ENCODE measurements at regions of chr3 and their contacts with region 1.

Region 1: GRCh38 chr3:116299646-116300081 is 145.6 kb downstream of the LSAMP start:
- DNase-seq: peak; percentile 31
- ATAC-seq: peak; percentile 88
- H3K4me3 ChIP-seq: no peak overlapping the region
- H3K27ac ChIP-seq: no peak overlapping the region
- H3K4me1 ChIP-seq: no peaks in the 10 kb centered on the region
- H3K27me3 ChIP-seq: no peaks in the 10 kb centered on the region
- CTCF ChIP-seq: no peak
- EP300 ChIP-seq: no peak
- POLR2A ChIP-seq: no peak
- RAD21 ChIP-seq: no peak

Region 2: GRCh38 chr3:116216761-116217160 is 82.9 kb before region 1 on chr3:
- CTCF ChIA-PET with region 1: no interaction called
- POLR2A ChIA-PET with region 1: no interaction called
- RAD21 ChIA-PET with region 1: no interaction called
- SMC1A ChIA-PET with region 1: no interaction called
- in situ Hi-C with region 1: no loop called
- intact Hi-C with region 1: no loop called
- DNase-seq: no peak
- ATAC-seq: no peak
- H3K4me3 ChIP-seq: no peak overlapping the region
- H3K27ac ChIP-seq: no peak overlapping the region
- H3K4me1 ChIP-seq: no peaks in the 10 kb centered on the region
- H3K27me3 ChIP-seq: peaks cover 0 to 3% of the 10 kb centered on the region in 2 experiments; a peak in 1 of 4 replicates
- CTCF ChIP-seq: no peak
- EP300 ChIP-seq: no peak
- POLR2A ChIP-seq: no peak
- RAD21 ChIP-seq: no peak

Region 3: DNA sequence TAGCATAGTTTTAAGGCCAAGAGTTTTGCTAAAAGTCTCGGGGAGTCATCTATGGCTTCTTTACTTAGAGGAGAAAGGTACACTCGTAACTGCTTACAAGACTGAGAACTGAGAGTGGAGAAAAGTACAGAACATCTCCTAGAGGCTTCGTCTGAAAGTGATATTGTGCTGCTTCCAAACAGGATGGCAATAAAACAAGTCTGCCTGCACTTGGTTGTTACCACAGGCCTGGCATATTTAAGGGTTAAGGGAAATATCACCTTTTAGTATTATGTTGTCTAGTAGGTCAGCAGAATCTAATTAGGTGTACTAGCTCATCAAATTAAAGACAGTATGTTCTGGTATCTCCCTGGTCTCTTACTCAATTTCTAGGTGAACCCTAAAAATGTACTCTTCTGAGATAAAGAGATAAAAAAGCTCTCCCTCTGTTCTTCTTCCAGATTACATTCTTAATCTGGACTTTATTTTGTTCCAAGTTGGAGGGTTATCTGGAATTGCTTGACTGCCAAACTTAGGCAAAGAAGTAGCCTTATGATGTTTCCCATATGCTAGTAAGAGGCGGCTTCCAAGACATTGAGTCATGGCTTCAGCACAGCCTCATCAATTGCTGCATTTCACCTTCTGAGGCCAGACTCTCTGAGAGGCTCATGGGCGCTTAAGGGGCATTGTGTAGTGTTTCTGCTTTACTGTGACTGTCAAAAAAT is 35.7 kb before region 1 on chr3:
- CTCF ChIA-PET with region 1: no interaction called
- POLR2A ChIA-PET with region 1: interaction called, 8 read pairs
- RAD21 ChIA-PET with region 1: interaction called, 3 read pairs
- SMC1A ChIA-PET with region 1: interaction called, 13 read pairs
- in situ Hi-C with region 1: no loop called
- intact Hi-C with region 1: no loop called
- DNase-seq: no peak
- ATAC-seq: no peak
- H3K4me3 ChIP-seq: no peak overlapping the region
- H3K27ac ChIP-seq: no peak overlapping the region
- H3K4me1 ChIP-seq: no peaks in the 10 kb centered on the region
- H3K27me3 ChIP-seq: no peaks in the 10 kb centered on the region
- CTCF ChIP-seq: no peak
- EP300 ChIP-seq: no peak
- POLR2A ChIP-seq: no peak
- RAD21 ChIP-seq: no peak

Region 4: GRCh38 chr3:116281313-116282143 is 18.1 kb before region 1 on chr3:
- CTCF ChIA-PET with region 1: interaction called, 5 read pairs
- POLR2A ChIA-PET with region 1: interaction called, 3 read pairs
- RAD21 ChIA-PET with region 1: interaction called, 17 read pairs
- SMC1A ChIA-PET with region 1: interaction called, 12 read pairs
- in situ Hi-C with region 1: no loop called
- intact Hi-C with region 1: no loop called
- DNase-seq: no peak
- ATAC-seq: peak; percentile 89
- H3K4me3 ChIP-seq: no peak overlapping the region
- H3K27ac ChIP-seq: no peak overlapping the region
- H3K4me1 ChIP-seq: no peaks in the 10 kb centered on the region
- H3K27me3 ChIP-seq: no peaks in the 10 kb centered on the region; a peak in 2 of 4 replicates
- CTCF ChIP-seq: no peak
- EP300 ChIP-seq: peak in 1 of 2 experiments; percentile 43; a peak in 1 of 4 replicates
- POLR2A ChIP-seq: no peak
- RAD21 ChIP-seq: no peak

Region 5: DNA sequence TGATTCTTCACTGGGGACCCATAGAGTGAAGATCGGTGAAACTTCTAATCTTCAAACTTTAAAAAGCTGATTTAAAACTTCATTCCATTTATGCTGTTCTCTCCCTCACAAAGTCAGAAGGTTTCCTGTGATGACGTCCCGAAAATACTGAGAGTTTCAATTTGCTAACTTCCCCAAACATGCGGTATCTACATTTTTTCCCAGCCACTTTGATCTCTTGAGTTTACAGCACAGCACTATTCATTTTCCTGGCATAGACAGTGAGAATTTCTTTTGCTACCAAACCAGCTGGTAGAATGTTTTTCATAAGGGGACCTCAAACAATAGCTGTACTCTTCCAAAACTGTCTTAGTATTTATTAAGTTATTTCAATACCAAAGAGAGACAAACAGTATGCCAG is 11.2 kb before region 1 on chr3:
- CTCF ChIA-PET with region 1: interaction called, 3 read pairs
- POLR2A ChIA-PET with region 1: interaction called, 6 read pairs
- RAD21 ChIA-PET with region 1: interaction called, 17 read pairs
- SMC1A ChIA-PET with region 1: interaction called, 8 read pairs
- in situ Hi-C with region 1: no loop called
- intact Hi-C with region 1: no loop called
- DNase-seq: peak; percentile 34
- ATAC-seq: peak; percentile 87
- H3K4me3 ChIP-seq: no peak overlapping the region
- H3K27ac ChIP-seq: no peak overlapping the region
- H3K4me1 ChIP-seq: no peaks in the 10 kb centered on the region
- H3K27me3 ChIP-seq: no peaks in the 10 kb centered on the region; a peak in 1 of 4 replicates
- CTCF ChIP-seq: no peak
- EP300 ChIP-seq: peak; percentile 47 to 60; a peak in 2 of 4 replicates
- POLR2A ChIP-seq: no peak
- RAD21 ChIP-seq: no peak

Region 6: GRCh38 chr3:116322750-116323375 is 23.2 kb after region 1 on chr3:
- CTCF ChIA-PET with region 1: interaction called, 4 read pairs
- POLR2A ChIA-PET with region 1: interaction called, 6 read pairs
- RAD21 ChIA-PET with region 1: no interaction called
- SMC1A ChIA-PET with region 1: interaction called, 11 read pairs
- in situ Hi-C with region 1: no loop called
- intact Hi-C with region 1: no loop called
- DNase-seq: no peak
- ATAC-seq: no peak
- H3K4me3 ChIP-seq: no peak overlapping the region
- H3K27ac ChIP-seq: no peak overlapping the region
- H3K4me1 ChIP-seq: no peaks in the 10 kb centered on the region
- H3K27me3 ChIP-seq: no peaks in the 10 kb centered on the region
- CTCF ChIP-seq: no peak
- EP300 ChIP-seq: no peak
- POLR2A ChIP-seq: no peak
- RAD21 ChIP-seq: no peak

Region 7: GRCh38 chr3:116678853-116679252 is 379.2 kb after region 1 on chr3:
- CTCF ChIA-PET with region 1: no interaction called
- POLR2A ChIA-PET with region 1: no interaction called
- RAD21 ChIA-PET with region 1: no interaction called
- SMC1A ChIA-PET with region 1: no interaction called
- in situ Hi-C with region 1: no loop called
- intact Hi-C with region 1: no loop called
- DNase-seq: no peak
- ATAC-seq: no peak
- H3K4me3 ChIP-seq: no peak overlapping the region
- H3K27ac ChIP-seq: no peak overlapping the region
- H3K4me1 ChIP-seq: no peaks in the 10 kb centered on the region
- H3K27me3 ChIP-seq: no peaks in the 10 kb centered on the region
- CTCF ChIP-seq: no peak
- EP300 ChIP-seq: no peak
- POLR2A ChIP-seq: no peak
- RAD21 ChIP-seq: no peak

Measured in GM12878 (cell line).